ENCODE measurements at regions of chr20 and their contacts with region 1.

Region 1: DNA sequence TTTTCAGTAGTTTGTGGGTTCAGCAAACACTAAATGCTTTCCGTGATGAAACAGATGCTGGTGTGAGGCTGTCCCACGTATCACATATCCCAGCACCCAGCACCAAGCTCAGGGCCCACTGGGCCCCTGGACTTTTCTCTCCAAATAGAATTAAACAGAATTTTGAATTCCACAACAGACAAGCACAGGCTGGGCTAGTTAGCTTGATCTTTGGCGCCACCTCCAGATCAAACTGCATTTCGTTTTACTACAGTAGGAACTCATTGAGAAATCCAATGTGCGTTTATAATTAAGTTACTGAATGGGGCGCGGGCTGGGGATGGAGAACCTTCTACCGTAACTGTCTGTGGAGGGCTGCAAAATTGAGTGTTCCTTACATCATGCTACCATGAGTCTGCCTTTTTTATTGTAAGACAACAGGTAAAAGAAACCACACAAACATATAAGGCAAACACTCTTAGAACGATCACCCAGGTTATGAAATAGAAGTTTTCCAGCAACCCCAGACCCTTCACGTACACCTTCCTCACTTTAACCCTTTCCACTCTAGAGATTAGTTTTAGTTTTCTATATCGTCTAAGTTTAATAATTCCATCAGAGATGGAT is 107.8 kb downstream of the ZFP64 start:
- DNase-seq: peak in 1 of 2 donors; percentile 23
- ATAC-seq: no peak
- H3K4me3 ChIP-seq: no peak overlapping the region
- H3K27ac ChIP-seq: no peak overlapping the region
- H3K4me1 ChIP-seq: no peaks in the 10 kb centered on the region
- H3K27me3 ChIP-seq: no peaks in the 10 kb centered on the region
- CTCF ChIP-seq: peak; percentile 43

Region 2: GRCh38 chr20:51643390-51643789 is 440.3 kb before region 1 on chr20:
- intact Hi-C with region 1: loop called in 1 of 2 experiments (anchors 5 kb)
- DNase-seq: no peak
- ATAC-seq: no peak
- H3K4me3 ChIP-seq: no peak overlapping the region
- H3K27ac ChIP-seq: no peak overlapping the region
- H3K4me1 ChIP-seq: no peaks in the 10 kb centered on the region
- H3K27me3 ChIP-seq: peaks cover 0 to 2% (median 0%) of the 10 kb centered on the region in 3 donors
- CTCF ChIP-seq: no peak

Region 3: GRCh38 chr20:51800060-51800794 is 283.5 kb before region 1 on chr20:
- intact Hi-C with region 1: loop called in 1 of 2 experiments (anchors 10 kb)
- DNase-seq: peak; percentile 36 to 57
- ATAC-seq: peak in 1 of 4 donors; percentile 37
- H3K4me3 ChIP-seq: peak overlapping the region; percentile 53
- H3K27ac ChIP-seq: no peak overlapping the region
- H3K4me1 ChIP-seq: peaks cover 8% of the 10 kb centered on the region
- H3K27me3 ChIP-seq: peaks cover 0 to 48% (median 21%) of the 10 kb centered on the region in 3 donors
- CTCF ChIP-seq: peak; percentile 53

Measured in psoas muscle (tissue), 8 donors.